Endothelial cell of umbilical vein (primary cell): ENCODE measurements at regions of chr4 and their contacts with region 1.

Region 1: GRCh38 chr4:71941001-71941400 is 90.8 kb upstream of the NPFFR2 start:
- DNase-seq: peak; percentile 10
- H3K4me3 ChIP-seq: no peak overlapping the region
- H3K27ac ChIP-seq: no peak overlapping the region
- H3K4me1 ChIP-seq: peaks cover 16% of the 10 kb centered on the region
- H3K27me3 ChIP-seq: no peaks in the 10 kb centered on the region
- CTCF ChIP-seq: peak; percentile 27 to 31
- POLR2A ChIP-seq: no peak

Region 2: GRCh38 chr4:71978210-71978835 is 37.3 kb after region 1 on chr4:
- CTCF ChIA-PET with region 1: no interaction called
- POLR2A ChIA-PET with region 1: no interaction called
- dilution Hi-C with region 1: no loop called
- intact Hi-C with region 1: loop called (anchors 1 kb)
- DNase-seq: peak; percentile 66
- H3K4me3 ChIP-seq: no peak overlapping the region
- H3K27ac ChIP-seq: no peak overlapping the region
- H3K4me1 ChIP-seq: peaks cover 6% of the 10 kb centered on the region
- H3K27me3 ChIP-seq: no peaks in the 10 kb centered on the region
- CTCF ChIP-seq: no peak
- POLR2A ChIP-seq: no peak

Region 3: GRCh38 chr4:72006586-72006985 is 65.6 kb after region 1 on chr4:
- CTCF ChIA-PET with region 1: no interaction called
- POLR2A ChIA-PET with region 1: no interaction called
- dilution Hi-C with region 1: no loop called
- intact Hi-C with region 1: loop called (anchors 2 kb)
- DNase-seq: peak; percentile 73
- H3K4me3 ChIP-seq: no peak overlapping the region
- H3K27ac ChIP-seq: peak overlapping the region; percentile 7
- H3K4me1 ChIP-seq: peaks cover 12% of the 10 kb centered on the region
- H3K27me3 ChIP-seq: no peaks in the 10 kb centered on the region
- CTCF ChIP-seq: no peak
- POLR2A ChIP-seq: no peak

Region 4: GRCh38 chr4:72631296-72631695 is 690.3 kb after region 1 on chr4:
- CTCF ChIA-PET with region 1: no interaction called
- POLR2A ChIA-PET with region 1: no interaction called
- dilution Hi-C with region 1: no loop called
- intact Hi-C with region 1: no loop called
- DNase-seq: no peak
- H3K4me3 ChIP-seq: no peak overlapping the region
- H3K27ac ChIP-seq: no peak overlapping the region
- H3K4me1 ChIP-seq: no peaks in the 10 kb centered on the region
- H3K27me3 ChIP-seq: no peaks in the 10 kb centered on the region
- CTCF ChIP-seq: no peak
- POLR2A ChIP-seq: no peak